ENCODE measurements at regions of chr6 and their contacts with region 1.

Region 1: DNA sequence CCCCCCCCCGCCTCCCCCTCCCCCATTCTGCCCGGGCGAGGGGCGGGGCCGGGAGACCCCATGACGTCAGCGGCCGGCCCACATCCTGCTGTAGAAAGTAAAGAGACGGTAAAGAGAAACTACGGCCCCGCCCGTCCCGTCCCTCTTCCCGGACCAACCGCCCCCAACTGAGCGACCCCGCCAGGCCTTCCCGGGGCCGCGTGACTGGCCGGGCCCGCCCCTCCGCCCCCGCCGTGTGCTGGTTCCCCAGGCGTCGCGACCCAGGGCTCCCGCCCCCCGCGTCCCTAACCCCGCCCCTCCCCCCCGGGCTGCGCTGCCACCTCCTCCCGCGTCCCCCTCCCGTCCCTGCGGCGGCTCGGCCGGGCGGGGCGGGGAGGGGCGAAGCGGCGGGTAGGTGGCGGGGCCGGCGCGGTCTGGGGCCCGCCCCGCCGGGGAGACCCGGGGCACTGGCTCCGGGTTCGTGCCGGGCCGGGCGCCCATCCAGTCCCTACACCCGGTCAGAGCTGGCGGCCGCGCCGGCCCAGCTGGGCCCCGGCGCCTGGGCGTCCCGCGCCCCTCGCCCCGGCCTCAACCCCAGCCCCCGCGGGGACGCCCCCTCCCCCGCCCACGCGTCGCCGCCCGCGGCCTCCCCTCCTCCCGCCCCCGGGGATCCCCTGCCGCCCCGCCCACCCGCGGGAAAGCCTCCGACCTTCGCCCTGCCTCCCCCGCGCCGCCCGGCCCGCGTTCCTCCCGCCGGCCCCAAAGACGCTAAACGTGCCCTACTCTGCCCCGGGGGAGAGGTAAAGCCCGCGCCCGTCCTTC is 636 bp upstream of the HIVEP1 start:
- DNase-seq: peak; percentile 96
- CTCF ChIP-seq: no peak

Region 2: DNA sequence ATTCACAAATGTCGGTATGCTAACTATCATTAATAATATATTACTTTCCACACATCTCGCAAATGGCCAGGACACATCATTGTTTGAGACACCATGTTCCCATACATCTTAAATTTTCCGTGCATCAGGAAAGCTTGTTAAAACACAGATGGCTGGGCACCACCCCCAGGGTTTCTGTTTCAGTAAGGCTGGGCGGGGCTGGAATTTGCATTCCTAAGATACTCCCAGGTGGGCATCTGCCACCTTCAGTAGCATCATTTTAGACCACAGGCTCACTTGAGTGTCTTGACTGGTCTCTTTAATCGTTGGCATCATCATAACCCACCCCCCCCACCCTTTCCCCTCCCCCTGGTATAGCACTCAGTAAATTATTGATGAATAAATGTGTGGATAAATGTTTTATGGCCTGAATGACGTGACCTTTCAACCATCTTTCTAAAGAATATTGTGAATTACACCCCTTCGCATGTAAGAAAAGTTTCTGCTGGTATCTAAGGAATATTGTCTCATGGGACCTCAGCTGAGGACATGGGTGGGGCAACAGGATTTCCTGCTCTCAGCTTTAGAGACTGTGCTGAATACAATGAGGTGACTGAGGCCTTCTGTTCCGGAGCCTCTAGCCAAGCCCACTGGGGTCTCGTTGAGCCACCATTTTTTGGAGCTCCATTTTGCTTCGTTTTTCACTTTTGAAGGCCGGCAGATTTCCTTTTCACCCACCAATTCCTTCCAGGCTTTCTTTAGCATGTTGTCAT is 654.9 kb before region 1 on chr6:
- in situ Hi-C with region 1: no loop called
- DNase-seq: no peak
- CTCF ChIP-seq: no peak

Region 3: DNA sequence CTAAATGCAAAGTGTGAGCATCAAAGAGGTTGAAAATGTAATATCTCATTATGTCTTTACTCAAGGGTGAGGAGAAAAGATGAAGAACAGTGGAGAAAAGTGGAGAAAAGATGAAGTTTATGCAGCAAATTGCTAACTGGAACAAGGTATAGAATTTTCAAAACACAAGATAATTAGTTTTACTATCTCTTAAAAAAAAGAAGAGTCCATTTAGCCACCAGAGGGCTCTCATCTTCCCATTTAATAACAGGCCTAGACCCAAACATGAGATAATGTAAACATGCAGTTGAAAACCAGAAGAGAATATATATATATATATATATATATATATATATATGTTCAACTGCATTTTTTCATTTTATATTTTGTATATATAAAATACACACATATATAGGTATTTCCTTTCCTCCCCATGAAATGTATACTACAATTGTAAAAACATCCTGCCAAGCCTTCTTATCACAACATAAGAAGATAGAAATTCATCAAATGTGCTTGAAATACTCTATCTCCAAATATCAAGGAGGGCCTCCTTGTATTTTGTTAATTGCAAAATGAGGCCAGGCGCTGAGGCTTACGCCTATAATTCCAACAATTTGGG is 311.3 kb before region 1 on chr6:
- in situ Hi-C with region 1: loop called (anchors 25 kb)
- DNase-seq: no peak
- CTCF ChIP-seq: no peak

Region 4: DNA sequence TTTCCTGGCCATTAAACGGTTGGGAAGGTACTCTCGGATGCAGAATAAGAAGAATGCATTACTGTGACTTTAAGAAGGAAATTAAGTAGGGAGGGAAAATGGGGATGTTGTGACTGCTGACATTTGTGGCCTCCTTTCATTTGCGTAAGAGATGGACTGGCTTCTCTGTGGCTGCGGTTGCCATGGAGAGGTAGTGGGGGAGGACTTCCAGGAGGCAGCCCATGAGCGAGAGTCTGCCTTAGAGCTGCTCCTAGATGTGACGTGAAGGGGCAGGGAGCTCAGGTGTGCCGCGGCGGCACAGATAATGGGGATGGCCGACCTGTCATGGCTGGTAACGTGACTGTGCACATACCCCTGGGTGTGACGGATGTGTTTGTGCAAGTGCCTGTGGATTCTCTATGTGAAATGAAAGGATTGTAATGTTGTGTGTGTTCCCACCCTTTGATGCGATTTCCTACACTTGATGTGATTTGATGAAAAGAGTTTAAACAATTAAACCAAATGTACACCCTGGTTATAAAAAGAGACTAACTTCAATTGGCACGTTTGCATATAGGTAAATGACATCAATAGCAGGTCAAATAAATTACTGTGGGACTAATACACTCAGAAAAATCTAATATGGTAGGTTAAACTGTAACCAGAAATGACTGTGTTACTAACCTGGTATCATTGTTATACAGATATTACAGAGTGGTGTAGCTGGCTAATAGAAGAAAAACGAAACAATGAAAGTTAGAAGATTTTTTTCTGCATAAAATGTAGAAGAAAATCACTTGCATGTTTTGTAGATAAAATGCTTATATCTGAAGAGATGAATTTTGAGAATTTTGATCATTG is 49.5 kb after region 1 on chr6:
- in situ Hi-C with region 1: loop called (anchors 10 kb)
- DNase-seq: peak; percentile 64
- CTCF ChIP-seq: no peak

Region 5: DNA sequence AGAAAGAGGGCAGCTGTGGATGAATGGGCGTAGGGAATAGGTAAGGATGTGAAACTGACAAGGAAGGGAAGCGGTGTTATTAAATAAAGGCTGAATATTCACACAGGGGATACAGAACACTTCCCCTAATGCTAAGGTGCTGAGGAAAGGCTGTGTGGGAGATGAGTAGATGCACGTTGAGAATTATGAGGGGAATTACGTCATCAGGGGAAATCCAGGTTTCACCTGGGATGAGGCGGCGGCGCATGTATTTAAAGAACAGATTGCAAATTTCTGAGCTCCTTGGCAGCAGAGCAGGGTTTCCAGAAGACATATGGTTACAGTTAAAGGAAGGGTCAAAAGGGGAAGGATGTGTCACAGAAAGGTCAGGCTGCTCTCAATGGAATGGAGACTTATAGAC is 250.0 kb after region 1 on chr6:
- in situ Hi-C with region 1: no loop called
- DNase-seq: no peak
- CTCF ChIP-seq: no peak

Measured in GM13976 (cell line).